GM12878 (cell line): ENCODE measurements at regions of chr5 and their contacts with region 1.

Region 1: DNA sequence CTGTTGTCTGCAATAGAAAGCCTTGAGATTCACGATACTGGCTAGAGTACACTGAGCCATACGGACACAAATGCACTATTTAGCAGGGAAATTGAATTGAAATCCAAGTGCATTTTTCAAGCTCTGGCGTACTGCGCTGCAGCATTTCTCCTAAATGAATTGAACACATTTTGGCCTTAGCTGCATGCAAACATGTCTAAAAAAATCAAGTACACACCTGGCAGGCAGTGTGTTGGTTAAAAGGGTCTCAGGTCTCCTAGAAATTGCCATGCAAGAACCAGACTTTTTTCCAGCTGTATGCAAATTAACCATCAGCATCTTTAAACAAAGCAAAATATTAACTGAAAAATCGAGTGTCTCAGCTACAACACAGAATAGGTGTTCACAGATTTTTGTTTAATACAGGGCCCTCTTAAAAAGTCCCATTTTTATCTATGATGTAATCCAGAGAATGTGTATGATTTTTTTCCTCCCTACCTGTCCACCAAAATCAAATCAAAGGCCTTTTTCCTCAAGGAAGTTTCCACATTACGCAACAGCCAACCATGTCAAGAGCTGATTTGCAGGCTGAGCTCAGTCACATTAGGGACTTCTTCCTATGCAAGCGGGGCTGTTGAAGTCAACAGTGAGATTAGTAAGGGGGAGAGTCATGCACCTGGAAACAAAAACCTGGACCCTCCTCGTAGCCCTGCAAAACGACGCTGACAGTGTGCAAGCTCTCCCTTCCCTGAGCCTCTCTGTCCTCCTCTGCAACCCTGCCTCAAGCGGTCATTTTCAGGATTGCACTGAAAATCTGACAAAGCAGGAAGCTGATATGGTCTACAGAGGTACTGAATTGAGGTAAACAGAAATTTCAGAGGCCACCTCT is 14.1 kb upstream of the SFXN1 start:
- DNase-seq: no peak
- ATAC-seq: peak; percentile 100
- H3K4me3 ChIP-seq: no peak overlapping the region
- H3K27ac ChIP-seq: no peak overlapping the region
- H3K4me1 ChIP-seq: no peaks in the 10 kb centered on the region
- H3K27me3 ChIP-seq: no peaks in the 10 kb centered on the region; a peak in 2 of 4 replicates
- CTCF ChIP-seq: peak; percentile 69 to 76 (median 74)
- EP300 ChIP-seq: no peak
- POLR2A ChIP-seq: no peak
- RAD21 ChIP-seq: peak; percentile 44

Region 2: DNA sequence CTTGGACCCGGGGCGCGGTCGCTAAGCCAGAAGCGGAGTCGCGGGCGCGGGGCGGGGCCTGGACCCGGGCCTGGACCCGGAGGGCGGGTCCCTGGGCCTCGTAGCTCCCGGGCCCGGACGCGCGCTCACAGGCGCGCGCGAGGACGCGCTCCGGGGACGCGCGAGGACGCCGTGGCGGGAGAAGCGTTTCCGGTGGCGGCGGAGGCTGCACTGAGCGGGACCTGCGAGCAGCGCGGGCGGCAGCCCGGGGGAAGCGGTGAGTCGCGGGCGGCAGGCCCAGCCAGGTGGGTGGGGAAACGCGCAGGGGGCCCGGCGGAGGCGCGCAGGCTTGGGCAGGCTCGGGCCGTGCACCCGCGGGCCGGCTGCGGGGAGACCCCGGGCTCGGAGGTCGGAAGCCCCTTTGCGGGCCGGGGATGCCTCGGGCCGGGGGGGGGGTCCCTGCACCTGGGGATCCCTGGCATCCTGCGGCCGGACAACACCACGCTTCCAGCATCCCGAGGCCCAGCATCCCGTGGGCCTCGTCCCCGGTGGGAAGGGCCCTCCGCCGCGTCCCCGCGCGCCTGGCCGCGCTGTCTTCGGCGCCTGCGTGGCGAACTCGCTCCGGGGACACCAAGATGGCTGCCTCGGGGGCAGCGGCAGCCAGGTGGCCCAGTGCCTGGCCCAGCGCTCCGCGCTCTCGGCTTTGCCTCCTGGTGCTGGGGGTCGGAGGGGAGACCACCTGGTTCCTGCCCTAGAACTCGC is 14.2 kb after region 1 on chr5 and contains the start of gene SFXN1:
- CTCF ChIA-PET with region 1: interaction called, 24 read pairs
- POLR2A ChIA-PET with region 1: interaction called, 5 read pairs
- RAD21 ChIA-PET with region 1: interaction called, 3 read pairs
- SMC1A ChIA-PET with region 1: interaction called, 3 read pairs
- in situ Hi-C with region 1: no loop called
- intact Hi-C with region 1: no loop called
- DNase-seq: no peak
- ATAC-seq: peak; percentile 91
- H3K4me3 ChIP-seq: peak within 1 kb of the TSS; percentile 75
- H3K27ac ChIP-seq: peak within 1 kb of the TSS; percentile 66
- H3K4me1 ChIP-seq: no peaks in the 10 kb centered on the region
- H3K27me3 ChIP-seq: 0 out of 4 replicates have a peak, but pooled peaks cover 0 to 2% of the 10 kb centered on the region in 2 experiments
- CTCF ChIP-seq: no peak
- EP300 ChIP-seq: no peak
- POLR2A ChIP-seq: peak; percentile 91
- RAD21 ChIP-seq: no peak
- polyA plus RNA-seq, gene SFXN1: 18.0 to 24.6 TPM

Region 3: DNA sequence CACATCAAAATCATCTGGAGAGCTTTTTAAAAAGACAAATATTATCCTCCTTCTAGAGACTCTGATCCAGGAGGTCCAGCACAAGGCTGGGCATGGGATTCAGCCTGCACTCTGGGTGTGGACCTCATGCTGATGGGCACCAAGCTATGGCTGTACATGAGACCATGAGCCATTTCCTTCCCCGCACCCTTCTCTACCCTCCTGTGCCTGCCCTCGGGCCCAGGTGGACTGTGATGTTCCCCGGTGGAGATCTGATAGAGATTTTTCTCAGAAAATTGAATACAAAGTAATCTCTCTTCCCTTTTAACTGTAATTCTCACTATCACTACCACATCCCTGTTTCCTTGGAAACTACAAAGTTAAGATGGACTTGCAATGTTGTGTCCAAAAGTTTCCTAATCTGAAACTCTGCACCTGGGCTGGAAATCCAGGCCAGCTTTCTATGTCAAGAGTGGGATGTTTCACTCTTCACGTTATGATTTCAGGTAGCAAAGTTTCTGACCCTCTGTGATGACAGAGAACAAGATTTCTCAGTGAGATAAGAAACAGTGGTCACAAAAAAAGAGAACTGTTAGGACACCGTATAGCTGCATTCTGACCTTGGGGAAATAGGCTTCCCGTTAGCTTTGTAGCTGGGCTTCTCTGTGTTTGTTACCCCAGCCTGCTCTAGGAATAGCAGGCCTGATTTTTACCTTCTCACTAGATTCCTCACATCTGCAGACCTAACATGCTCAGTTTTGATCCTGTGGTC is 25.6 kb after region 1 on chr5:
- CTCF ChIA-PET with region 1: interaction called, 11 read pairs
- POLR2A ChIA-PET with region 1: no interaction called
- RAD21 ChIA-PET with region 1: no interaction called
- SMC1A ChIA-PET with region 1: no interaction called
- in situ Hi-C with region 1: no loop called
- intact Hi-C with region 1: no loop called
- DNase-seq: no peak
- ATAC-seq: no peak; the same call in 2 of the 3 replicates
- H3K4me3 ChIP-seq: no peak overlapping the region
- H3K27ac ChIP-seq: no peak overlapping the region
- H3K4me1 ChIP-seq: no peaks in the 10 kb centered on the region
- H3K27me3 ChIP-seq: no peaks in the 10 kb centered on the region
- CTCF ChIP-seq: no peak
- EP300 ChIP-seq: no peak
- POLR2A ChIP-seq: no peak
- RAD21 ChIP-seq: no peak